ENCODE measurements at regions of chr9 and their contacts with region 1.

Region 1: GRCh38 chr9:115883457-115884329 is 269.9 kb upstream of the PAPPA start:
- DNase-seq: peak in 2 of 5 donors; percentile 19
- ATAC-seq: peak; percentile 47 to 83 (median 69)
- H3K4me3 ChIP-seq: no peak overlapping the region
- H3K27ac ChIP-seq: no peak overlapping the region
- H3K4me1 ChIP-seq: no peaks in the 10 kb centered on the region
- H3K27me3 ChIP-seq: no peaks in the 10 kb centered on the region
- CTCF ChIP-seq: peak; percentile 19 to 68 (median 54)
- POLR2A ChIP-seq: no peak

Region 2: GRCh38 chr9:116101516-116101915 is 217.8 kb after region 1 on chr9:
- intact Hi-C with region 1: loop called in 1 of 10 experiments (anchors 10 kb)
- DNase-seq: no peak
- ATAC-seq: peak in 1 of 4 donors; percentile 86
- H3K4me3 ChIP-seq: no peak overlapping the region
- H3K27ac ChIP-seq: no peak overlapping the region
- H3K4me1 ChIP-seq: no peaks in the 10 kb centered on the region
- H3K27me3 ChIP-seq: no peaks in the 10 kb centered on the region
- CTCF ChIP-seq: no peak
- POLR2A ChIP-seq: no peak

Region 3: GRCh38 chr9:116149844-116150243 is 266.2 kb after region 1 on chr9:
- intact Hi-C with region 1: loop called in 3 of 10 experiments (anchors 5 to 10 kb)
- DNase-seq: no peak
- ATAC-seq: peak in 1 of 4 donors; percentile 47
- H3K4me3 ChIP-seq: no peak overlapping the region
- H3K27ac ChIP-seq: no peak overlapping the region
- H3K4me1 ChIP-seq: peaks cover 0 to 11% (median 0%) of the 10 kb centered on the region in 12 donors
- H3K27me3 ChIP-seq: peaks cover 0 to 29% (median 4%) of the 10 kb centered on the region in 9 donors
- CTCF ChIP-seq: peak; percentile 25 to 67 (median 55)
- POLR2A ChIP-seq: no peak

Region 4: GRCh38 chr9:116494815-116495634 is 611.3 kb after region 1 on chr9:
- intact Hi-C with region 1: loop called in 1 of 10 experiments (anchors 10 kb)
- DNase-seq: peak in 1 of 5 donors; percentile 27
- ATAC-seq: peak in 2 of 4 donors; percentile 27 to 45
- H3K4me3 ChIP-seq: no peak overlapping the region
- H3K27ac ChIP-seq: no peak overlapping the region
- H3K4me1 ChIP-seq: no peaks in the 10 kb centered on the region
- H3K27me3 ChIP-seq: no peaks in the 10 kb centered on the region
- CTCF ChIP-seq: peak; percentile 46 to 73 (median 61)
- POLR2A ChIP-seq: no peak

Region 5: DNA sequence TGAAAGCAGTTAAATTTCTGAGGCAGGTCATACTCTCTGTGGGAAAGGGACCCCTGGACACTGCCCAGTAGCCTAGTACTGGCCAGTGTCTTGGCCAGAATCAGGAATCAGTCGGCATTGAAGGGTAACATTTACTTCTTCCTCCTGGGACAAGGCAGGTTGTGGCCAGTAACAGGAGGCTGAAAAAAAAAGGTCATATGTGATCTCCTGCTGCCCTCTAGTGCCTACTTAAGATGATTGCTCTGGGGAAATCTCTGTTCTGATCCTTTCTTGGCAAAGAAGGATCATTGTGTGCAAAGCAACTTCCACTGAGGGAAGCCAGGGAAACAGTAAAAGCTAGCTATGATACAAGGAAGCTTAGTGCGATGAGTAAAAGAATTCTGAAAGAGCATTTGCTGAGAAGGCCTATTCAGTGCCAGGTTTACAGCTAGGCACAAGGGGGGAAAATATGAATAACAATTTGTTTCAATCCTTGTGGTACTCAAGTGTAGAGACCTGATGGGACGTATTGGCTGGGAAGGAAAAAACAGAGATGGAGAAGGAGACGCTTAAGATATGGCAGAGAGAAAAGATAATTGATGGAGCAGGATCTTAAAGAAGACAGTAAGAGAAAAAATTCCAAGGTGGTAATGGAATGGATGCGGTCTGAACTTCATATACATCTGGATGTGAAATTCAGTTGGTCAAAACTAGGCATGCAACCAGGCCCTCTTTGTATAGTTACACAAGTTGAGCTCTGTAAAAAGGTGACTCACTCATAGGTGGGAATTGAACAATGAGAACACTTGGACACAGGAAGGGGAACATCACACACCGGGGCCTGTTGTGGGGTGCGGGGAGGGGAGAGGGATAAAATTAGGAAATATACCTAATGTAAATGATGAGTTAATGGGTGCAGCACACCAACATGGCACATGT is 777.6 kb after region 1 on chr9:
- intact Hi-C with region 1: loop called in 3 of 10 experiments (anchors 10 kb)
- DNase-seq: peak in 1 of 5 donors; percentile 15
- ATAC-seq: peak; percentile 59 to 86 (median 82)
- H3K4me3 ChIP-seq: no peak overlapping the region
- H3K27ac ChIP-seq: no peak overlapping the region
- H3K4me1 ChIP-seq: peaks cover 0 to 18% (median 7%) of the 10 kb centered on the region in 12 donors
- H3K27me3 ChIP-seq: no peaks in the 10 kb centered on the region
- CTCF ChIP-seq: peak; percentile 44 to 80 (median 70)
- POLR2A ChIP-seq: no peak

Measured in heart left ventricle (tissue), 16 donors.